Naive thymus-derived CD4-positive, alpha-beta T cell (primary cell): ENCODE measurements at regions of chr13 and their contacts with region 1.

Region 1: GRCh38 chr13:94549232-94550061 is 46.5 kb downstream of the TGDS start:
- DNase-seq: peak; percentile 81 to 95 (median 92)
- ATAC-seq: peak; percentile 94
- H3K4me3 ChIP-seq: peak overlapping the region; percentile 88
- H3K4me3 Mint-ChIP-seq: peak overlapping the region; percentile 88 to 100 (median 94)
- H3K27ac ChIP-seq: peak overlapping the region; percentile 95
- H3K27ac Mint-ChIP-seq: peak overlapping the region; percentile 96 to 100 (median 99)
- H3K4me1 ChIP-seq: peaks cover 8 to 14% of the 10 kb centered on the region in 2 donors
- H3K4me1 Mint-ChIP-seq: peaks cover 15 to 44% (median 30%) of the 10 kb centered on the region in 7 donors
- H3K27me3 ChIP-seq: no peaks in the 10 kb centered on the region
- H3K27me3 Mint-ChIP-seq: peaks cover 0 to 16% (median 5%) of the 10 kb centered on the region in 5 donors

Region 2: DNA sequence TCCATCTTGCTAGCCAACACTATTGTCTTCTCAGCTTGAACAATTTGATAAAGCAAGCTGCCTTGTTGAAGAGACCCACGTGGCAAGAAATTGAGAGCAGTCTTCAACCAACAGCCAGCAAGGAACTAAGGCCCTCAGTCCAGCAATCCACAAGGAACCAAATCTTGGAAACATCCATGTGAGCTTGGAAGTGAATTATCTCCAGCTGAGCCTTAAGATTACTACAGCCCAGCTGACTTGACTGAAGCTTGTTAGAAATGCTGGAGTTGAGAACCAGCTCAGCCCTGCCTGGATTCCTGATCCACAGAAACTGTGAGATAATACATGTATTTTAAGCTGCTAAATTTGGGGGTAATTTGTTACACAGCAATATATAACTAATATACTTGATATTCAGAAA is 43.7 kb before region 1 on chr13:
- CTCF ChIA-PET with region 1: no interaction called
- POLR2A ChIA-PET with region 1: interaction called, 5 read pairs
- intact Hi-C with region 1: loop called in 1 of 2 experiments (anchors 1 kb)
- DNase-seq: no peak
- ATAC-seq: no peak
- H3K4me3 ChIP-seq: no peak overlapping the region
- H3K4me3 Mint-ChIP-seq: no peak overlapping the region
- H3K27ac ChIP-seq: no peak overlapping the region
- H3K27ac Mint-ChIP-seq: no peak overlapping the region
- H3K4me1 ChIP-seq: peaks cover 3 to 18% of the 10 kb centered on the region in 2 donors
- H3K4me1 Mint-ChIP-seq: peaks cover 5 to 23% (median 21%) of the 10 kb centered on the region in 7 donors
- H3K27me3 ChIP-seq: no peaks in the 10 kb centered on the region
- H3K27me3 Mint-ChIP-seq: peaks cover 3 to 23% (median 6%) of the 10 kb centered on the region in 5 donors

Region 3: GRCh38 chr13:94595950-94596574 is 46.6 kb after region 1 on chr13 and contains the start of gene TGDS:
- CTCF ChIA-PET with region 1: interaction called, 5 read pairs
- POLR2A ChIA-PET with region 1: interaction called, 32 read pairs
- intact Hi-C with region 1: loop called (anchors 1 kb)
- DNase-seq: peak; percentile 71 to 89 (median 86)
- ATAC-seq: peak; percentile 99
- H3K4me3 ChIP-seq: peak within 1 kb of the TSS; percentile 92
- H3K4me3 Mint-ChIP-seq: peak within 1 kb of the TSS; percentile 92 to 99 (median 97)
- H3K27ac ChIP-seq: peak within 1 kb of the TSS; percentile 80
- H3K27ac Mint-ChIP-seq: peak within 1 kb of the TSS; percentile 83 to 96 (median 93)
- H3K4me1 ChIP-seq: peaks cover 16 to 19% of the 10 kb centered on the region in 2 donors
- H3K4me1 Mint-ChIP-seq: peaks cover 29 to 53% (median 41%) of the 10 kb centered on the region in 7 donors
- H3K27me3 ChIP-seq: no peaks in the 10 kb centered on the region
- H3K27me3 Mint-ChIP-seq: no peaks in the 10 kb centered on the region
- total RNA-seq, gene TGDS: 5.9 to 20.5 (median 13.7) TPM

Region 4: DNA sequence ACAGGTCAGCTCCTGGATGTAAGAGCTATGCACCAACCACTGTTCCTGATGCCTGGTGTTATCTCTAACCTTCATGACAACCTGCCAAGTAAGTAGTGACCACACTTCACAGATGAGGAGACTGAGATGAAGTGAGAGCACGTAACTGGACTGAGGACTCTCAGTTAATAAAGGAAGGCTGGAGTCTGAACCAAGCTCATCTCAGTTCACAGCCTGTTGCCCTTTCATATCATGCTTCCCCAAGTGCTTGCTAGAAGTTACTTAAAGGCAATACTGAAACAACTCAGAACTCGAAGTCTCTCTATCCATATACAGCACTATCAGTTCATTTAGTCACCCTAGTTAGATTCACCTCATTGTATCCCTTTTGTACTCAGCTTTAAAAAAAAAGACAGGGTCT is 632.1 kb after region 1 on chr13:
- CTCF ChIA-PET with region 1: no interaction called
- POLR2A ChIA-PET with region 1: no interaction called
- intact Hi-C with region 1: loop called (anchors 2 to 5 kb)
- DNase-seq: no peak
- ATAC-seq: no peak
- H3K4me3 ChIP-seq: no peak overlapping the region
- H3K4me3 Mint-ChIP-seq: peak overlapping the region in 1 of 10 donors; percentile 39
- H3K27ac ChIP-seq: no peak overlapping the region
- H3K27ac Mint-ChIP-seq: peak overlapping the region in 7 of 9 donors; percentile 9 to 76 (median 35)
- H3K4me1 ChIP-seq: peaks cover 14 to 50% of the 10 kb centered on the region in 2 donors
- H3K4me1 Mint-ChIP-seq: peaks cover 40 to 95% (median 78%) of the 10 kb centered on the region in 7 donors
- H3K27me3 ChIP-seq: no peaks in the 10 kb centered on the region
- H3K27me3 Mint-ChIP-seq: no peaks in the 10 kb centered on the region